H1 (cell line): ENCODE measurements at regions of chr14 and their contacts with region 1.

Region 1: GRCh38 chr14:56491299-56492285 is 88.0 kb upstream of the TMEM260 start:
- DNase-seq: peak; percentile 71 to 83
- H3K4me3 ChIP-seq: no peak overlapping the region
- H3K27ac ChIP-seq: no peak overlapping the region
- H3K4me1 ChIP-seq: peaks cover 0 to 10% (median 1%) of the 10 kb centered on the region in 4 experiments; a peak in 1 of 7 replicates
- H3K27me3 ChIP-seq: no peaks in the 10 kb centered on the region
- CTCF ChIP-seq: peak; percentile 30 to 95 (median 65)
- EP300 ChIP-seq: no peak
- POLR2A ChIP-seq: no peak
- RAD21 ChIP-seq: peak; percentile 87 to 89

Region 2: GRCh38 chr14:56501909-56502530 is 10.4 kb after region 1 on chr14:
- CTCF ChIA-PET with region 1: interaction called, 18 read pairs
- POLR2A ChIA-PET with region 1: no interaction called
- DNase-seq: no peak
- H3K4me3 ChIP-seq: peak overlapping the region in 1 of 4 experiments; percentile 0; a peak in 1 of 8 replicates
- H3K27ac ChIP-seq: no peak overlapping the region
- H3K4me1 ChIP-seq: peaks cover 0 to 12% (median 6%) of the 10 kb centered on the region in 4 experiments; a peak in 2 of 7 replicates
- H3K27me3 ChIP-seq: no peaks in the 10 kb centered on the region
- CTCF ChIP-seq: no peak
- EP300 ChIP-seq: no peak
- POLR2A ChIP-seq: no peak
- RAD21 ChIP-seq: no peak

Region 3: DNA sequence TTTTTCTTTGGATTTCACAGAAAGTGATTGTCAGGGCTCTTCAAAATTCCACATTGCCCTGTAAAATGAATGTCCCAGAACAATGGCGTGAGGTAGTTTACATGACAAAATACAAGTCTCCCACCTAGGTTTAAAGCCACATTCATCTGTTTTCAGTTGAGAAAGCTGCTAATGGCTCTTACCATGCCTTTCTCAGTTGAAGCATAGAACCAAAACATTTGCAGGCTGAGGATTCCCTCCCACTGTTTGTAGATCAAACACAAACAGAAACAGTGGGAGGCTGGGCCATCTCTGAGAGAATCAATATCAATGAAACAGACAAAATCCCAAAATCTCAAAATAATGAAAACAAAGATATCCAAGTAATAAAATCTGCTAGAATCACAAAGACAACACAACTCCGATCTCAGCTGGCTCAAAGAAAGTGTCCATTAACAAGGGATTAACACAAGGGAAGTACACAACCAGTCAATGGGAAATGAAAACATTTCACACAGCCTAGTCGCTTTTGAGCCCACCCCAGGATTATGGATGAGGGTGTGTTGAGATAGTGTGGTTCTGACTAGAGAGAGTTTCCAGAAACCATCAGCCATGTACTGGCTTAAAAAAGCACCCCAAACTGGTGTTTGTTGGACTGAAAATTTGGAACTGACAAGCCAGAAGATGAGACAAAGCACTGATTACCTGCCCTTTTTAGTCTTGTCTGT is 33.5 kb after region 1 on chr14:
- CTCF ChIA-PET with region 1: interaction called, 32 read pairs
- POLR2A ChIA-PET with region 1: no interaction called
- DNase-seq: no peak
- H3K4me3 ChIP-seq: peak overlapping the region in 1 of 4 experiments; percentile 17; a peak in 1 of 8 replicates
- H3K27ac ChIP-seq: no peak overlapping the region
- H3K4me1 ChIP-seq: peaks cover 0 to 6% (median 3%) of the 10 kb centered on the region in 4 experiments; a peak in 3 of 7 replicates
- H3K27me3 ChIP-seq: peaks cover 0 to 2% (median 0%) of the 10 kb centered on the region in 4 experiments; a peak in 3 of 7 replicates
- CTCF ChIP-seq: no peak
- EP300 ChIP-seq: no peak; a peak in 1 of 3 replicates
- POLR2A ChIP-seq: no peak
- RAD21 ChIP-seq: no peak

Region 4: GRCh38 chr14:56555921-56556570 is 64.5 kb after region 1 on chr14:
- CTCF ChIA-PET with region 1: interaction called, 105 read pairs
- POLR2A ChIA-PET with region 1: no interaction called
- DNase-seq: no peak
- H3K4me3 ChIP-seq: no peak overlapping the region
- H3K27ac ChIP-seq: no peak overlapping the region
- H3K4me1 ChIP-seq: peaks cover 0 to 4% (median 0%) of the 10 kb centered on the region in 4 experiments; a peak in 1 of 7 replicates
- H3K27me3 ChIP-seq: no peaks in the 10 kb centered on the region
- CTCF ChIP-seq: peak in 2 of 3 experiments; percentile 51 to 77; a peak in 3 of 4 replicates
- EP300 ChIP-seq: no peak
- POLR2A ChIP-seq: no peak
- RAD21 ChIP-seq: peak; percentile 88 to 89

Region 5: GRCh38 chr14:57182760-57183503 is 691.3 kb after region 1 on chr14:
- CTCF ChIA-PET with region 1: interaction called, 10 read pairs
- POLR2A ChIA-PET with region 1: no interaction called
- DNase-seq: no peak
- H3K4me3 ChIP-seq: no peak overlapping the region
- H3K27ac ChIP-seq: no peak overlapping the region
- H3K4me1 ChIP-seq: peaks cover 0 to 2% (median 0%) of the 10 kb centered on the region in 4 experiments; a peak in 1 of 7 replicates
- H3K27me3 ChIP-seq: no peaks in the 10 kb centered on the region
- CTCF ChIP-seq: peak; percentile 78 to 87 (median 82)
- EP300 ChIP-seq: no peak
- POLR2A ChIP-seq: no peak
- RAD21 ChIP-seq: peak; percentile 98